Natural killer cell (primary cell): ENCODE measurements at regions of chr16 and their contacts with region 1.

Region 1: DNA sequence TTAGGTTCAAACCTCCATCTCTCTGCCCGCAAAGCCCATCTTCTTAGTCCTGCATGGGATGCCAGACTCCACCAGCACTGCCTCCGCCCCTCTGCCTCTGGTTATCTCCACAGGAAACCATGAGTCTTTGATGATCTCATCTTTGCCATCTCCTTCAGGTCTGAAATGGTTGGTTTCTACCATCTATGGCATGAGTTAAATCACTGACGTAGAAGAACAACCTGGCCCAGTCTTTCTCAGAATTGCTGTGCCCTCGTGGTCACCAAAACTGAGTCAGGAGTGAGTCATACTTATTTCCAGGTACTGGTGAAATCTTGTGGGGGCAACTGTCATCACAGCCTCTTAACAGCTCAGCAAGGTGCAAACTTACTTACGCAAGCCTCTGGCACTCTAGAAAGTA is 468.7 kb upstream of the C16orf82 start:
- DNase-seq: peak; percentile 30 to 72
- ATAC-seq: peak; percentile 83 to 88 (median 88)
- H3K4me3 ChIP-seq: no peak overlapping the region
- H3K4me3 Mint-ChIP-seq: peak overlapping the region; percentile 51
- H3K27ac ChIP-seq: peak overlapping the region; percentile 60
- H3K27ac Mint-ChIP-seq: peak overlapping the region; percentile 84 to 96
- H3K4me1 ChIP-seq: peaks cover 31% of the 10 kb centered on the region
- H3K4me1 Mint-ChIP-seq: peaks cover 18 to 49% of the 10 kb centered on the region in 2 donors
- H3K27me3 ChIP-seq: no peaks in the 10 kb centered on the region
- H3K27me3 Mint-ChIP-seq: peaks cover 0 to 7% of the 10 kb centered on the region in 2 donors
- CTCF ChIP-seq: no peak

Region 2: DNA sequence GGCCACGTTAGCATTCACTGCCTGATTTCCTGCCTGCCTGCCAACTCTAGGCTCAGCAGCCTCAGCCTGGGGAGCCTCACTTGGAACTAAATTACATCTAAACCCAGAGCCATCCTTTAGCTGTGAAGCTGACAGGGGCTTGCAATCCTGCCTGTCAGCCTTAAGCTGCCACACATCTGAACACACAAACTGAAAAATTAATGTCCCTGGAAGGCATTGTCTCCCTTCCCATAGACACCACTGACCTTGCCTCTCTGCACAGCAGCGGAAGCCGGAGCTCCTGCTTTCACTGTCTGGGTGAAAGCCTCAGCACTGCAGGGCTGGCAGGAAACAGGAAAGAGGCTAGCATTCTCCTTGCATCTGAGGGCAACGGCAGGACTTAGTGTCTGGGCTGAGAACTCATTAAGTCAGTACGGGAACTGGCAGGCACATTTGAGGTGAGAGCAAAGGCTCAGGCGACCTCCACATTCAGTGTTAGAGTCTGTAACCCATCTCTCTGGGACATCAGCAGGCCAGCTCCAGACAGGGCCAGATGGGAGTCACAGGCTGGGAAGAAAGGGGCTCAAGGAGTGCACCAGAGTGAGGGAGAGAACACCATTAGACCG is 16.3 kb after region 1 on chr16:
- intact Hi-C with region 1: no loop called
- DNase-seq: peak in 1 of 2 donors; percentile 12
- ATAC-seq: no peak
- H3K4me3 ChIP-seq: no peak overlapping the region
- H3K4me3 Mint-ChIP-seq: no peak overlapping the region
- H3K27ac ChIP-seq: no peak overlapping the region
- H3K27ac Mint-ChIP-seq: no peak overlapping the region
- H3K4me1 ChIP-seq: no peaks in the 10 kb centered on the region
- H3K4me1 Mint-ChIP-seq: peaks cover 0 to 5% of the 10 kb centered on the region in 2 donors
- H3K27me3 ChIP-seq: no peaks in the 10 kb centered on the region
- H3K27me3 Mint-ChIP-seq: peaks cover 0 to 6% of the 10 kb centered on the region in 2 donors
- CTCF ChIP-seq: no peak

Region 3: GRCh38 chr16:26645614-26646013 is 47.6 kb after region 1 on chr16:
- intact Hi-C with region 1: loop called (anchors 5 kb)
- DNase-seq: peak; percentile 37 to 49
- ATAC-seq: peak; percentile 58 to 84 (median 71)
- H3K4me3 ChIP-seq: no peak overlapping the region
- H3K4me3 Mint-ChIP-seq: no peak overlapping the region
- H3K27ac ChIP-seq: no peak overlapping the region
- H3K27ac Mint-ChIP-seq: peak overlapping the region in 1 of 2 donors; percentile 73
- H3K4me1 ChIP-seq: peaks cover 8% of the 10 kb centered on the region
- H3K4me1 Mint-ChIP-seq: peaks cover 6 to 10% of the 10 kb centered on the region in 2 donors
- H3K27me3 ChIP-seq: peaks cover 2% of the 10 kb centered on the region
- H3K27me3 Mint-ChIP-seq: peaks cover 12 to 18% of the 10 kb centered on the region in 2 donors
- CTCF ChIP-seq: peak; percentile 58